Gastrocnemius medialis (tissue), 4 donors: ENCODE measurements at regions of chr10 and their contacts with region 1.

Region 1: GRCh38 chr10:68331455-68332258 is at the start of gene HNRNPH3:
- DNase-seq: peak; percentile 98
- ATAC-seq: peak; percentile 81 to 83
- H3K4me3 ChIP-seq: peak within 1 kb of the TSS; percentile 94 to 98 (median 97)
- H3K27ac ChIP-seq: peak within 1 kb of the TSS; percentile 99 to 100 (median 100)
- H3K4me1 ChIP-seq: peaks cover 44 to 51% of the 10 kb centered on the region in 2 donors
- H3K27me3 ChIP-seq: no peaks in the 10 kb centered on the region
- CTCF ChIP-seq: peak in 3 of 5 experiments; percentile 6 to 17 (median 8)
- POLR2A ChIP-seq: peak; percentile 100
- total RNA-seq, gene HNRNPH3: 19.7 to 51.6 (median 25.8) TPM

Region 2: DNA sequence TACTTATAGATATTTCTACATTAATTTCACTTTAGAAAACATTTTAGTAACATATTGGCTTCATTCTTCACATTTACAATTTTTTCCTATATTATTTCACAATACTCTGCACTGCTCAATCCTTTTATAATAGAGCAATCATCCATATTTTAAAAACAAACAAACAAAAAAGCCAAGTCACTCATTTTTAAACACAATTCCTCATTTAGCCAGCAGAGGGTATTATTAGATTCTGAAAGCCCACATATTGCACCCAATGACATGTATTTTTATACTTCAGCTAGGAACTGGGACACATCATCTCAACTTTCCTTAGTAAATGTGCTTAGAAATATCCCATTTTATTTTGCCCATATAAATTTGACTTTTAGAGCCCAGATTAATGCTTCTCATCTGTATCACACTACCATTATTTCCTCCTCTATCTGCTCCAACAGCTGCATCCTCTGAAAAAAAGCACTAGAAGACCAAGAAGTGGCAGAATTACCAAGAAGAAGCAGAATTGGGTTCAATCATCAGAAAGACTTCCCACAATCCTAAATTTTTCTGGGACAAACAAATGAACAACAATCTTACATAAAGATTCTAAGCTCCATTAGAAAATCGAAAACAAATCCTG is 665.1 kb before region 1 on chr10:
- in situ Hi-C with region 1: no loop called
- intact Hi-C with region 1: loop called (anchors 10 kb)
- DNase-seq: no peak
- ATAC-seq: peak in 1 of 2 donors; percentile 25
- H3K4me3 ChIP-seq: no peak overlapping the region
- H3K27ac ChIP-seq: peak overlapping the region; percentile 82 to 91 (median 88)
- H3K4me1 ChIP-seq: peaks cover 33 to 52% of the 10 kb centered on the region in 2 donors
- H3K27me3 ChIP-seq: no peaks in the 10 kb centered on the region
- CTCF ChIP-seq: peak; percentile 36 to 69 (median 42)
- POLR2A ChIP-seq: no peak

Region 3: DNA sequence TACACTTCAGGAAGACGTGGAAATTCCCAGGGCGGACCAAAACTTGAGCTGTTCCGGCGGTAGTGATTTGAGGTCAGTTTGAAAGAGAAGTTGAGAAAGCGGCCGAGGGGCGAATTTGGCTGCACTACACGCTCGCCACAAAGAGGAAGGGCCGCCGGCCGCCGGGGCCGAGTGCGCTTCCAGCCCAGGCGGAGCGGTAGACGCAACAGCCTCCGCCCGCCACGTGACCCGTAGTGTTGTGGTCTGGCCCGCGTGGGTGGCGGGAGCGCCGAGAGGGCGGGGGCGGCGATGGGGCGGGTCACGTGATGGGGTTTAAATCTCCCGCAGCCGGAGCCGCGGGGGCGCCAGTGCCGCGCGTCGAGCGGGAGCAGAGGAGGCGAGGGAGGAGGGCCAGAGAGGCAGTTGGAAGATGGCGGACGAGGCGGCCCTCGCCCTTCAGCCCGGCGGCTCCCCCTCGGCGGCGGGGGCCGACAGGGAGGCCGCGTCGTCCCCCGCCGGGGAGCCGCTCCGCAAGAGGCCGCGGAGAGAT is 447.3 kb before region 1 on chr10 and contains the start of gene SIRT1:
- in situ Hi-C with region 1: loop called in 1 of 4 experiments (anchors 25 kb)
- intact Hi-C with region 1: loop called (anchors 1 kb)
- DNase-seq: peak; percentile 97
- ATAC-seq: peak; percentile 86 to 88
- H3K4me3 ChIP-seq: peak within 1 kb of the TSS; percentile 74 to 98 (median 85)
- H3K27ac ChIP-seq: peak within 1 kb of the TSS; percentile 87 to 96 (median 94)
- H3K4me1 ChIP-seq: peaks cover 20 to 22% of the 10 kb centered on the region in 2 donors
- H3K27me3 ChIP-seq: no peaks in the 10 kb centered on the region
- CTCF ChIP-seq: peak in 1 of 5 experiments; percentile 27
- POLR2A ChIP-seq: peak; percentile 98
- total RNA-seq, gene SIRT1: 18.7 to 21.5 (median 19.9) TPM

Region 4: GRCh38 chr10:68231106-68231816 is 100.4 kb before region 1 on chr10:
- in situ Hi-C with region 1: no loop called
- intact Hi-C with region 1: loop called (anchors 2 kb)
- DNase-seq: peak; percentile 12 to 26
- ATAC-seq: peak; percentile 70 to 76
- H3K4me3 ChIP-seq: peak overlapping the region; percentile 62 to 79 (median 68)
- H3K27ac ChIP-seq: peak overlapping the region; percentile 12 to 58 (median 51)
- H3K4me1 ChIP-seq: peaks cover 3 to 4% of the 10 kb centered on the region in 2 donors
- H3K27me3 ChIP-seq: no peaks in the 10 kb centered on the region
- CTCF ChIP-seq: peak in 2 of 5 experiments; percentile 10 to 39
- POLR2A ChIP-seq: no peak

Region 5: GRCh38 chr10:68526626-68527307 is 195.1 kb after region 1 on chr10:
- in situ Hi-C with region 1: no loop called
- intact Hi-C with region 1: loop called (anchors 2 kb)
- DNase-seq: no peak
- ATAC-seq: peak; percentile 61 to 74
- H3K4me3 ChIP-seq: peak overlapping the region; percentile 83 to 100 (median 93)
- H3K27ac ChIP-seq: peak overlapping the region; percentile 88 to 100 (median 99)
- H3K4me1 ChIP-seq: peaks cover 4 to 8% of the 10 kb centered on the region in 2 donors
- H3K27me3 ChIP-seq: no peaks in the 10 kb centered on the region
- CTCF ChIP-seq: no peak
- POLR2A ChIP-seq: no peak